Activated CD4-positive, alpha-beta T cell treated with anti-CD3 and anti-CD28 coated beads for 36 hours (primary cell): ENCODE measurements at regions of chr1 and their contacts with region 1.

Region 1: GRCh38 chr1:111399792-111400610 is 27.5 kb downstream of the OVGP1 start:
- DNase-seq: peak; percentile 65
- ATAC-seq: no peak
- H3K4me3 Mint-ChIP-seq: no peak overlapping the region
- H3K27ac Mint-ChIP-seq: no peak overlapping the region
- H3K4me1 Mint-ChIP-seq: peaks cover 34% of the 10 kb centered on the region
- H3K27me3 Mint-ChIP-seq: no peaks in the 10 kb centered on the region

Region 2: GRCh38 chr1:111309690-111310089 is 90.3 kb before region 1 on chr1:
- CTCF ChIA-PET with region 1: no interaction called
- POLR2A ChIA-PET with region 1: no interaction called
- intact Hi-C with region 1: no loop called
- DNase-seq: no peak
- ATAC-seq: no peak
- H3K4me3 Mint-ChIP-seq: no peak overlapping the region
- H3K27ac Mint-ChIP-seq: no peak overlapping the region
- H3K4me1 Mint-ChIP-seq: no peaks in the 10 kb centered on the region
- H3K27me3 Mint-ChIP-seq: no peaks in the 10 kb centered on the region

Region 3: GRCh38 chr1:111346089-111346885 is 53.7 kb before region 1 on chr1:
- CTCF ChIA-PET with region 1: interaction called, 14 read pairs
- POLR2A ChIA-PET with region 1: no interaction called
- intact Hi-C with region 1: no loop called
- DNase-seq: peak; percentile 88
- ATAC-seq: peak; percentile 97
- H3K4me3 Mint-ChIP-seq: peak overlapping the region; percentile 78
- H3K27ac Mint-ChIP-seq: peak overlapping the region; percentile 68
- H3K4me1 Mint-ChIP-seq: peaks cover 17% of the 10 kb centered on the region
- H3K27me3 Mint-ChIP-seq: no peaks in the 10 kb centered on the region

Region 4: GRCh38 chr1:111412839-111413238 is 12.8 kb after region 1 on chr1:
- CTCF ChIA-PET with region 1: interaction called, 20 read pairs
- POLR2A ChIA-PET with region 1: no interaction called
- intact Hi-C with region 1: no loop called
- DNase-seq: no peak
- ATAC-seq: no peak
- H3K4me3 Mint-ChIP-seq: no peak overlapping the region
- H3K27ac Mint-ChIP-seq: no peak overlapping the region
- H3K4me1 Mint-ChIP-seq: no peaks in the 10 kb centered on the region
- H3K27me3 Mint-ChIP-seq: no peaks in the 10 kb centered on the region